Dendritic cell treated with granulocyte-macrophage colony-stimulating factor and Interleukin-4, amounts not matched to agents 40 ng/mL and 50 ng/mL, for 4 days (primary cell): ENCODE measurements at regions of chr2 and their contacts with region 1.

Region 1: GRCh38 chr2:112054847-112055729 is at the start of gene TMEM87B:
- H3K4me3 Mint-ChIP-seq: peak within 1 kb of the TSS; percentile 97
- H3K27ac Mint-ChIP-seq: peak within 1 kb of the TSS; percentile 94
- H3K4me1 Mint-ChIP-seq: peaks cover 31% of the 10 kb centered on the region
- H3K27me3 Mint-ChIP-seq: no peaks in the 10 kb centered on the region

Region 2: GRCh38 chr2:111246620-111247061 is 808.4 kb before region 1 on chr2:
- intact Hi-C with region 1: no loop called
- H3K4me3 Mint-ChIP-seq: no peak overlapping the region
- H3K27ac Mint-ChIP-seq: no peak overlapping the region
- H3K4me1 Mint-ChIP-seq: no peaks in the 10 kb centered on the region
- H3K27me3 Mint-ChIP-seq: no peaks in the 10 kb centered on the region

Region 3: DNA sequence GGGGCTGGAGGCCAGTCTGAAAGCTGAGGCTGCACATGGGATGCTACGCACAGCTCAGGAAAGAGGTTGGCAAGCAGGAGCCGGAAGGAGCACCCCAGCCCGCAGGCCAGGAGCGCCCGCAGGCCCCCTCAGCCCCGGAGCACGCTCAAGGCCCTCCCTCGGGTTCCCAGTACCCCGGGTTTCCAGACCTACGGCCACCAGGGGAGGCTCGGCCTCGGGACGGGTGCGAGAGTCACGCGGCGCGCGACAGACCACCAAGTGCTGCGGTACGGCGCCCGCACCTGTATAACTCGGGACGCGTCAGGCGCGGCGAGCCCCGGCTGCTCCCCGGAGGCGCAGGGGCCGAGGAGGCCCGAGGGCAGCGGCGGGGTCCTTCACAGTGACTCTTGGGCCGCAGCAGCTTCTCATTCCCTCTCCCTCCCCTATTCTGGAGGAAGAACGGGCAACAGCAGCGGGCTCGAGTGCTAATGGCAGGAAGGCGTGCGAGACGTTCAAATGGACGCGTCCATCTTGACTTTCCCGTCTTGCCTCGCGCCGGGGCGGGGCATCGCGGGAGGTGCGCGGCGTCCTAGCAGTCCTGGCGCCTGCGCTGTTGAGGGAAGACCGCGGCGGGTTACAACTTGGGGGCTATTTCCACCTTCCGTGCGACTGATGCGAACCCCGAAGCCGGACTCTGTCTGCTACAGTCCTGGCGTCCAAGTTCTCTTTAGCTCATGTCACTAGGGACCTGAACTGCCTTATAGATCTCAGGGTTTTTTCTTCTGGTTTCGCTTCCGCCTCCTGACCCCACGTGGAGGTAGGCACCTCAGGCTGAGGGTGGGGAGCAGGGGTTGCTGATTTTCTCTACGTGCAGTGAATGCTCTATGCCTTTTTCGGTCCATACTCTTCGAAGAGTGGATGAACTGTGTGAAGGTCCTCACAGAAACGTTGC is 171.2 kb before region 1 on chr2 and contains the start of gene ANAPC1:
- intact Hi-C with region 1: no loop called
- H3K4me3 Mint-ChIP-seq: peak within 1 kb of the TSS; percentile 92
- H3K27ac Mint-ChIP-seq: peak within 1 kb of the TSS; percentile 89
- H3K4me1 Mint-ChIP-seq: peaks cover 11% of the 10 kb centered on the region
- H3K27me3 Mint-ChIP-seq: no peaks in the 10 kb centered on the region

Region 4: DNA sequence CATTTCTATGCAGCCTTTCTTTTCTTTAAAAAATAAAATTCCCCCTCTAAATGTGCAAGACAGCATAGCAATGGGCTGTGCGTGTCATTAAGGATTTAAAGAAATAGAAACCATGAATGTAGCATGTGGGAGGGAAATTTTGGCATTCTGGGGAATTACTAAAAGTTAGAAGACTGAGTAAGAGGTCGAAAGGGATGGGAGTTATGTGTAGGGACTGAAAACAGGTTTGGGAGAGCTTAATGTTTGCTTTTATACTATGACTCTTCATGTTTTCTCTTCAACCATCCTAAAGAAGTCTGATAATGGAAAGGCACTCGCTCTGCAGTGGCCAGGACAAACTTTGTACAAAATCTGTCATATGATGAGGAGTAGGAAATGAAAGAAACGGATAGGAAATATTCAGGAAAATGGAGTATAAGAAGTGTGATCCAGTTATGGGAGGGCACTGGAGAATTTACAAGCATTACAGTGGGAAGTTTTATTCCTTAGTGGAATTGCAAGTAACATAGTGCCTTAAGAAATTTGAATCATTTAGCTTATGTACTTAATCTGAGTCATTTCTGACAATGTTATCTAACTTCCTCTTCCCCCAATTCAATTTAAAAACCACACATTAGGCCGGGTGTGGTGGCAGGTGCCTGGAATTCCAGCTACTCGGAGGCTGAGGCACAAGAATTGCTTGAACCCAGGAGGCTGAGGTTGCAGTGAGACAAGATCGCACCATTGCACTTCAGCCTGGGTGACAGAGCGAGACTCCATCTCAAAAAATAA is 20.6 kb after region 1 on chr2:
- intact Hi-C with region 1: no loop called
- H3K4me3 Mint-ChIP-seq: no peak overlapping the region
- H3K27ac Mint-ChIP-seq: peak overlapping the region; percentile 57
- H3K4me1 Mint-ChIP-seq: peaks cover 21% of the 10 kb centered on the region
- H3K27me3 Mint-ChIP-seq: no peaks in the 10 kb centered on the region

Region 5: GRCh38 chr2:112138159-112138773 is 83.2 kb after region 1 on chr2 and contains the start of gene FBLN7:
- intact Hi-C with region 1: no loop called
- H3K4me3 Mint-ChIP-seq: peak within 1 kb of the TSS; percentile 59
- H3K27ac Mint-ChIP-seq: no peak within 1 kb of the TSS
- H3K4me1 Mint-ChIP-seq: peaks cover 8% of the 10 kb centered on the region
- H3K27me3 Mint-ChIP-seq: peaks cover 54% of the 10 kb centered on the region

Region 6: GRCh38 chr2:112275306-112275886 is 220.3 kb after region 1 on chr2 and contains the start of gene ZC3H6:
- intact Hi-C with region 1: loop called (anchors 5 kb)
- H3K4me3 Mint-ChIP-seq: peak within 1 kb of the TSS; percentile 85
- H3K27ac Mint-ChIP-seq: peak within 1 kb of the TSS; percentile 97
- H3K4me1 Mint-ChIP-seq: no peaks in the 10 kb centered on the region
- H3K27me3 Mint-ChIP-seq: no peaks in the 10 kb centered on the region